MCF 10A (cell line): ENCODE measurements at regions of chr2 and their contacts with region 1.

Region 1: GRCh38 chr2:179263446-179264367 is 925 bp downstream of the SESTD1 start:
- DNase-seq: peak; percentile 64
- H3K4me3 Mint-ChIP-seq: peak overlapping the region; percentile 85
- H3K27ac Mint-ChIP-seq: peak overlapping the region; percentile 89
- H3K4me1 Mint-ChIP-seq: peaks cover 29% of the 10 kb centered on the region
- H3K27me3 Mint-ChIP-seq: no peaks in the 10 kb centered on the region
- CTCF ChIP-seq: no peak

Region 2: DNA sequence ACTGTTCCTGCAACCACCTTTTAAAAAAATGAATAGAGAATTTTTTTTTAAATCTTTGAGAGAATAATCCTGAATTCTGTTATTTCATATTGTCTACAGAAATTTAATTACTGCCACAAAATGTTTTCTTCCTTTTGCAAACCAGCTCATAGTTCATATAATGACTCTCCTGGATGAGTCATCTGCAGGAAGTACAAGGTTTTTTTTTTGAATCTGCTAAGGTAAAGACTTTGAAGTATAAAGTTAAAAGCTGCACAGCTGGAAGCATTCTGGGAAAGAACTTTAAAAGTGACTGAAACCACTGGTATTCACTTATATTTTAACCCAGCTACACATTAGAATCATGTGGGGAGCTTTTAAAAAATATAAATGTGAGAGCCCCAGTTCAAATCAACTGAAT is 24.5 kb before region 1 on chr2:
- CTCF ChIA-PET with region 1: interaction called, 5 read pairs
- POLR2A ChIA-PET with region 1: interaction called, 14 read pairs
- intact Hi-C with region 1: no loop called
- DNase-seq: peak; percentile 57
- H3K4me3 Mint-ChIP-seq: no peak overlapping the region
- H3K27ac Mint-ChIP-seq: no peak overlapping the region
- H3K4me1 Mint-ChIP-seq: peaks cover 49% of the 10 kb centered on the region
- H3K27me3 Mint-ChIP-seq: no peaks in the 10 kb centered on the region
- CTCF ChIP-seq: no peak

Region 3: DNA sequence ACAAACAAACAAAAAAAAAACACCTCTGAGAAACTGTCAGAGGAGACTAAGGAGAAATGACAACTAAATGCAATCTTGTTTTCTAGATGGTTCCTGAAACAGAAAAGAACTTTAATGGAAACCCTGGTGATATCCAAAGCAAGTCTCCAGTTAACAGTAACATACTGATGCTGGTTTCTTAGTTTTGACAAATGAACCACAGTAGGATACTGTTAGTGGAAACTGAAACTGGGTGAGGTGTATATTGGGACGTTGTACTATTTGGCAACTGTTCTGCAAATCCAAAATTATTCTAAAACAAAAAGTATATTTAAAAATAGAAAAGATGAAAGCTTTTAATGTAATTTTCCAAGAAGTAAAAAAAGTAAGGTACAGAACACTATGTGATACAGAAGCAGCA is 10.5 kb before region 1 on chr2:
- CTCF ChIA-PET with region 1: interaction called, 7 read pairs
- POLR2A ChIA-PET with region 1: interaction called, 15 read pairs
- intact Hi-C with region 1: no loop called
- DNase-seq: no peak
- H3K4me3 Mint-ChIP-seq: no peak overlapping the region
- H3K27ac Mint-ChIP-seq: peak overlapping the region; percentile 70
- H3K4me1 Mint-ChIP-seq: peaks cover 28% of the 10 kb centered on the region
- H3K27me3 Mint-ChIP-seq: no peaks in the 10 kb centered on the region
- CTCF ChIP-seq: no peak

Region 4: DNA sequence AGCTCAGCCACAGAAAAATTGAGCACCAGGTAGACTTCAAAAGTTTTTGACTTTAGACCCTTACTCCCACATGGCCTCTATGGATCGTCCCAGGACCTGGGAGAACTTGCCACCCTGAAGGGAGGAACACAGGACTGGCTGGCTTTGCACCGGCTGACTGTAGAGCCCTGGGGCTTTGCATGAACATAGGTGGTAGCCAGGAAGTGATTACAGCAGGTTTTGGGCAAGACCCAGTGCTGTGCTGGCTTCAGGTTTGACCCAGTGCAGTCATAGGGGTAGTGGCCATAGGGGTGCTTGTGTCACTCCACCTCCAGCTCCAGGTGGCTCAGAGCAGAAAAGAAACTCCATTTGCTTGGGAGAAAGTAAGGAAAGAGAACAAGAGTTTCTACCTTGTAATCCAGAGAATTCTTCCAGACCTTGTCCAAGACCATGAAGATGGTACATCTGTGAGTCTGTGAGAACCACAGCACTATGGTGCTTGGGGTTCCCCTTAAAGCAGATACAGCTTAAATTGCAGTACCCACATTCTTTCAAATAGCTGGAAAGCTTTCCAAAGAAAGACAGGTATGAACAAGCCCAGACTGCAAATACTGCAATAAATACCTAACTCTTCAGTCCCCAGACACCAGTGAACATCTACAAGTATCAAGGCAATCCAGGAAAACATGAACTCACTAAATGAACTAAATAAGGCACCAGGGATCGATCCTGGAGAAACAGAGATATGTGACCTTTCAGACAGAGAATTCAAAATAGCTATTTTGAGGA is 13.9 kb after region 1 on chr2:
- CTCF ChIA-PET with region 1: interaction called, 6 read pairs
- POLR2A ChIA-PET with region 1: interaction called, 55 read pairs
- intact Hi-C with region 1: no loop called
- DNase-seq: peak; percentile 27
- H3K4me3 Mint-ChIP-seq: peak overlapping the region; percentile 28
- H3K27ac Mint-ChIP-seq: peak overlapping the region; percentile 71
- H3K4me1 Mint-ChIP-seq: peaks cover 45% of the 10 kb centered on the region
- H3K27me3 Mint-ChIP-seq: no peaks in the 10 kb centered on the region
- CTCF ChIP-seq: no peak

Region 5: DNA sequence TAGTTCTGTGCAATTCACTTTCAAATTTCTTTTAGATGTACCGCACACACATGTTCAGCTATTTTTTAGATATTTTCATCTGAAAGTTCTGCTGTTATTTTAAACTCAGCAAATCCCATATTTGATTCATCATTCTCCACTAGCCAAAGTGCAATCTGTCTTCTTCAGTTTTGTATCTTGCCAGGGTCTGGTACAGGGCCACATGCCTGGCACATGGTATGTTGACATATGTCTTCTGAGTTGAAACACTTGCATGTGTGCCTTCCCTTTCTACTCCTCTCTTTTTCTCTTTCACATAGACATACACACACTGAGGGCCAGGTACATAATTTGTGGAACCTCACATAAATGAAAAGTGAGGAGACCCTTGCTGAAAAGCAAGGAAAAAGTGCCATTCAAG is 26.6 kb after region 1 on chr2:
- CTCF ChIA-PET with region 1: no interaction called
- POLR2A ChIA-PET with region 1: no interaction called
- intact Hi-C with region 1: no loop called
- DNase-seq: no peak
- H3K4me3 Mint-ChIP-seq: no peak overlapping the region
- H3K27ac Mint-ChIP-seq: no peak overlapping the region
- H3K4me1 Mint-ChIP-seq: no peaks in the 10 kb centered on the region
- H3K27me3 Mint-ChIP-seq: no peaks in the 10 kb centered on the region
- CTCF ChIP-seq: no peak

Region 6: DNA sequence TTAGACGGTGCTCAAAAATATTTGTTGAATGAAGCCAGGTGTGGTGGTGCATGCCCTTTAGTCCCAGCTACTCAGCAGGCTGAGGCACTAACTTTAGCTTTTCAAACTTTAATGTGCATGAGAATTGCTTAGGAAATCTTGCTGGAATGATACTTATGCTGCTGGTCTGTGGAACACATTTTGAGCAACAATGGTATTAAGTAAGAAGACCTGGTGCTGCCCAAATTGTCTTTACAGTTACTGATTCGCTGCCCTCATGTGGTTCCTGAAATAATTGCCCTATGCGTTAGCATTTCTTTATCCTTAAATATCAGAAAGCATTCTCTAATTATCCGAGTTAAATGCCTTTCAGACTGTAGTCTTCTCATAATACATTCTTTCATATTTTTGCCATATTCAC is 77.0 kb after region 1 on chr2:
- CTCF ChIA-PET with region 1: interaction called, 5 read pairs
- POLR2A ChIA-PET with region 1: interaction called, 4 read pairs
- intact Hi-C with region 1: loop called (anchors 1 kb)
- DNase-seq: peak; percentile 63
- H3K4me3 Mint-ChIP-seq: no peak overlapping the region
- H3K27ac Mint-ChIP-seq: no peak overlapping the region
- H3K4me1 Mint-ChIP-seq: peaks cover 40% of the 10 kb centered on the region
- H3K27me3 Mint-ChIP-seq: no peaks in the 10 kb centered on the region
- CTCF ChIP-seq: peak; percentile 33